ENCODE measurements at regions of chr11 and their contacts with region 1.

Region 1: GRCh38 chr11:121520243-121521144 is 67.7 kb upstream of the SORL1-AS1 start:
- DNase-seq: no peak
- H3K4me3 Mint-ChIP-seq: no peak overlapping the region
- H3K27ac Mint-ChIP-seq: no peak overlapping the region
- H3K4me1 Mint-ChIP-seq: peaks cover 51% of the 10 kb centered on the region
- H3K27me3 Mint-ChIP-seq: no peaks in the 10 kb centered on the region

Region 2: DNA sequence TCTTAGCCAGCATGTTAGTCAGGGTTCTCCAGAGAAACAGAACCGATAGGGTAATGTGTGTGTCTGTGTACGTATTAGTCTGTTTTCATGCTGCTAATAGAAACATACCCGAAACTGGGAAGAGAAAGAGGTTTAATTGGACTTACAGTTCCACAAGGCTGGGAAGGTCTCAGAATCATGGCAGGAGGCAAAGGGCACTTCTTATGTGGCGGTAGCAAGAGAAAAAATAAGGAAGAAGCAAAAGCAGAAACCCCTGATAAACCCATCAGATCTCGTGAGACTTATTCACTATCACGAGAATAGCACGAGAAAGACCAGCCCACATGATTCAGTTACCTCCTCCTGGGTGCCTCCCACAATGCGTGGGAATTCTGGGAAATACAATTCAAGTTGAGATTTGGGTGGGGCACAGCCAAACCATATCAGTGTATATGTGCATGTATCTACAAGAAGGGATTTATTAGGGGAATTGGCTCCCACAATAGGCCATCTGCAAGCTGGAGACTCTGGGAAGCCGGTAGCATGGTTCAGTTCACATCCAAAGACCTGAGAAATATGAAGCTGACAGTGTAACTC is 1617.8 kb before region 1 on chr11:
- CTCF ChIA-PET with region 1: no interaction called
- POLR2A ChIA-PET with region 1: no interaction called
- intact Hi-C with region 1: no loop called
- DNase-seq: no peak
- H3K4me3 Mint-ChIP-seq: no peak overlapping the region
- H3K27ac Mint-ChIP-seq: no peak overlapping the region
- H3K4me1 Mint-ChIP-seq: no peaks in the 10 kb centered on the region
- H3K27me3 Mint-ChIP-seq: peaks cover 3% of the 10 kb centered on the region

Region 3: GRCh38 chr11:121431820-121432526 is 88.5 kb before region 1 on chr11:
- CTCF ChIA-PET with region 1: no interaction called
- POLR2A ChIA-PET with region 1: interaction called, 4 read pairs
- intact Hi-C with region 1: loop called (anchors 1 kb)
- DNase-seq: no peak
- H3K4me3 Mint-ChIP-seq: no peak overlapping the region
- H3K27ac Mint-ChIP-seq: peak overlapping the region; percentile 30
- H3K4me1 Mint-ChIP-seq: peaks cover 38% of the 10 kb centered on the region
- H3K27me3 Mint-ChIP-seq: no peaks in the 10 kb centered on the region

Region 4: DNA sequence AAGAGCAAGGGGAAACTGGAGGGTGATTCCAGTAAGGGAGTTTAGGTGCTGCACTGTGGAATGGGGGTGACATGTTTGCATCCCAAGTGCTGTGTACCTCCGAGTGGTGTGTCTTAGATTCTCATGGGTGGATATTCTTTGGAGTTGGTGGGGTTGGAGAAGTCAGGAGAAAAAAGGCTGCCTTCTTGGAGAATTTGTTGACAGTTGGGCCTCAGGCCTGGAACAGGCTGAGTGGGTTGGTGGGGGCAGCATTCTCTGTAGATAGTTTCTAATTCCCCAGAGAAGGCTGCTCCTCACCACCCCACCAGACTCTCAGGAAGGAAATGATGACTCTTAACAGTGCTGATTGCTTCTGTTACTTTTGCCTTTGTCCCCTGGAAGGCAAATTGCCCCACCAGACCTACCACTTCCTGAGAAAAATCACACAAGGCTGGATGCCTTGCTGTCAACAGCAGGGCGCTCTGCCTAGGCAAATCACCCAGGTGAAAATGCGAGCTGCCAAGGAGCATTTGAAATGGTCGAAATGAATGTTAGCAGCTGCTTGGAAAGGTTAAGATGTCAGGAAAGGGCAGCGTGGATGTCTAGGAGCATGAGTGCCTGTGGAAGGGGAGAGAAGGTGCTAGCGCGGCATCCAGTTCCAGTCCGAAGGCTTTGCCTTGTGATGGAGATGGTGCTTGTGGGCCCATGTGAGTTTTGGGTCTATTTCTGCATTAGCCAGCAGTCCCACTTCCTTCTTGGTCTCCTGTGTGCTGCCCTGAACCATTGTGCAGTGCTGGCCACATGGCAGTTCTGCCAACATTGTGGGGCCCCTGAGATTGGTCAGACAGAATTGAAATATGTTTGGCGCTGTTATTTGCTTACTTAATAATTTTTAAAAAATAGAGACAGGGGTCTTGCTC is 38.0 kb before region 1 on chr11:
- CTCF ChIA-PET with region 1: no interaction called
- POLR2A ChIA-PET with region 1: interaction called, 7 read pairs
- intact Hi-C with region 1: loop called (anchors 1 kb)
- DNase-seq: peak; percentile 74
- H3K4me3 Mint-ChIP-seq: peak overlapping the region; percentile 75
- H3K27ac Mint-ChIP-seq: peak overlapping the region; percentile 96
- H3K4me1 Mint-ChIP-seq: peaks cover 47% of the 10 kb centered on the region
- H3K27me3 Mint-ChIP-seq: no peaks in the 10 kb centered on the region

Region 5: DNA sequence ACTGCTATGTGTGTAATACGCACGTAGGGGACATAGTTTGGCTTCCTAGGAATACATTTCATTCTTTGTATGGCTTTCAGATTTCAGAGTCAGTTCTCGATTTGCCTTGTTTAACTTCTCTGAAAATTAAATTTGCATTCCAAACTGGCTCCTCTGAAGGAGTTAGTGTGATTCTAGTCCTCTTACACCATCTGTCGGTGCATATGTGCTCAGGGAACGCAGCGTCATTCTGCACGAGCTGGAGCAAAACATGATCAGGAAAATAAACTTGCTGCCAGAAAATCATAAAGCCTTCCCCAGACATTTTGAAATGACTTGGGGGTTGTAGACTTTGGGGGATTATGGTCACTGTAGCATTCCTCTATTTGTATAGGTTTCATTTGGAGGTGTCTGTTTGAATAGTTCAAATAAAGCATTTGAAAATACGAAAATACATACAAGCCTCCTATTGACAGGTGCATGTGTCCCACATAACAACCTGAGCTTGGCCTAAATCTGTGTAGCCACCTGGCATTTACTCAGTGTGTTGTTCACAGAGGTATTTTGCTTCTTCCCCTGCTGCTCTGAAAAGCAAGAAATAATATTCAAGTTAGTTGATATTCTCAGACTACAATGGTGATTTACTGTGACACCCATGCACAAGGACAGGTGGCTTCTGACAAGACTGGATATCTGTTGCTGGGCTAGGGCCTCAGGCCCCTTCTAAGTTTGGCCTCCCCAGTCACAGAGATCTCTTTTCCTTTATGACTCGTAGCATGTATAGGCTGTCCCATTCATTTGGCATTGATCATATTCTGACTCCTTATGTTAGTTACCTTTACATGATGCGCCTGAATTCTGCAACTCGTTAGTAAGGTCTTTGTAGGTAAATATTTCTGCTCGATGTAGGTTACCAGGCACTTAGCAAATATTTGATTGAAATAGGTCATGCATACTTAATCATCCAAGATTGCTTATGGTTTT is 13.9 kb after region 1 on chr11:
- CTCF ChIA-PET with region 1: interaction called, 3 read pairs
- POLR2A ChIA-PET with region 1: interaction called, 4 read pairs
- intact Hi-C with region 1: loop called (anchors 1 kb)
- DNase-seq: no peak
- H3K4me3 Mint-ChIP-seq: no peak overlapping the region
- H3K27ac Mint-ChIP-seq: no peak overlapping the region
- H3K4me1 Mint-ChIP-seq: peaks cover 51% of the 10 kb centered on the region
- H3K27me3 Mint-ChIP-seq: no peaks in the 10 kb centered on the region

Region 6: DNA sequence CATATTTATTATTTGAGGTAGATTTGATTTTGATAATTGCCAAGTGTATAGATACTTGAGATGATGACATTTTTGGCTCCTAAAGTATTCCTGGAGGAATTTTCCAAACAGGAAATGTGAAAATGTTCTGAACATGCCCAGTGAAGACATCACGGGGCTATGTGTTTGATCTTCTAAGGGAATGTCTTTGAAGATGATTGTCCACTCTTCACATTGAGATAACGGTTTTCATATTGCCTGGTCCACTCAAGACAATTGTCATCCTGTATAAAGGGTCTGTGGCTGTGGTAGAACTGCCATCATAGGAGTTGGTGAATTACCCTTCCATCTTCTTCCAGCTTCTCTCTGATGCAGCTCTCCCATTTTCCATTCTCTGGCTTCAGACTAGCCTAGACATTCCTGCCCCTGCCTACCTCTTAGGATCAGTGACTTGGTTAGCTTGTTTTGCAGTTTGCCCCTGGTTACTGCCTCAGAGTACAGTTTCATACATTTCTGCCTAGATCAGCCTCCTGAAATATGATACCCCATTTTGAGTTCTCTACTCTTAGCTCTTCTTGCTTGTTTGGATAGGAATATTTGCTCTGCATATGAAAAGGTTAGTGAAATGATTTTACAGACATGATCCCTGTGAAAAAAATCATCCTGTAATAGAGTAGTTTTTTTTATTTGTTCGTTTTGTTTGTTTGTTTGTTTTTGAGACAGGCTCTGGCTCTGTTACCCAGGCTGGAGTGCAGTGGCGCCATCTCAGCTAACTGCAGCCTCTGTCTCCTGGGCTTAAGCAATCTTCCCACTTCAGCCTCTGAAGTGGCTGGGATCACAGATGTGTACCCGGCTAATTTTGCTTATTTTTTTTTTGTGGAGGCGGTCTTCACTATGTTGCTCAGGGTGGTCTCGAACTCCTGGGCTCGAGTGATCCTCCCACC is 43.7 kb after region 1 on chr11:
- CTCF ChIA-PET with region 1: interaction called, 3 read pairs
- POLR2A ChIA-PET with region 1: no interaction called
- intact Hi-C with region 1: loop called (anchors 1 kb)
- DNase-seq: no peak
- H3K4me3 Mint-ChIP-seq: no peak overlapping the region
- H3K27ac Mint-ChIP-seq: no peak overlapping the region
- H3K4me1 Mint-ChIP-seq: peaks cover 50% of the 10 kb centered on the region
- H3K27me3 Mint-ChIP-seq: no peaks in the 10 kb centered on the region

Region 7: GRCh38 chr11:121582296-121582695 is 61.8 kb after region 1 on chr11:
- CTCF ChIA-PET with region 1: no interaction called
- POLR2A ChIA-PET with region 1: no interaction called
- intact Hi-C with region 1: loop called (anchors 5 kb)
- DNase-seq: peak; percentile 24
- H3K4me3 Mint-ChIP-seq: no peak overlapping the region
- H3K27ac Mint-ChIP-seq: peak overlapping the region; percentile 69
- H3K4me1 Mint-ChIP-seq: peaks cover 38% of the 10 kb centered on the region
- H3K27me3 Mint-ChIP-seq: no peaks in the 10 kb centered on the region